CD4-positive, alpha-beta memory T cell (primary cell): ENCODE measurements at regions of chr5 and their contacts with region 1.

Region 1: DNA sequence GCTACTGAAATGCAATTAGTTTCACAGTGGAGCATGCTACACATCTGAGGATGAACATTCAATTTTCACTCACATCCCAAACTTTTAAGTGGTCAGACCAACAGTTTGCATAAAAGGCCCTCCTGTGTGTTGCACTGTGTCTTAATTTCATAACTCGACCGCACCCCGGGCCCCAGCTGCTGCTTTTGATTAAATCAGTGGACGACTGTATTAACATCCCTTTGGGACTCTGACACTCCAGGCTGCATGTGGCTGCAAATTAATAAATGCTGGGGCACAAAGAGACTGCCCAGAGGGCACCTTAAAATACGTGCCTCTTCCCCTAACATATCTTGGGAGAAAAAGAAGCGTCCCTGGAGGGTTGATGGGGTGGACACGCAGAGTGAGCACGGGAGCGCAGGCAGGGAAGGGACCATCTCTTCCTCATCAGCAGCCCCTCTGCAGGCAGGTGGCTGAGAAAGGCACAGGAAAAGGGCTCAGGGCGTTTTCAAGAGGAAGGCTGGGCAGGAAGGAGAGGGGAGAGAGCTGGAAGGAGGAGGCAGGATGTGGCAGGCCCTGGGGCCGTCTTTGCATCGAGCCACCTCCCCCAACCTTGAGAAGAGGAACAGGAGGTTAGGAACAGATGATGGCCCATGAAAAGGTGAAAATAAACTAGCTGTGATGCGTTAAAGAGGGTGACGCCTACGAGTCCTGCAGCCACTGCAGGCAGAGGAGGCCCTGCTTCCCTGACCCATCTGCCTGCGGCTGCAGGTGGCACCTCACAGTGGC is 18.6 kb downstream of the MED10 start:
- DNase-seq: peak in 4 of 5 donors; percentile 33 to 56 (median 44)
- H3K4me3 ChIP-seq: no peak overlapping the region
- H3K4me3 Mint-ChIP-seq: peak overlapping the region; percentile 73 to 87 (median 79)
- H3K27ac ChIP-seq: no peak overlapping the region
- H3K27ac Mint-ChIP-seq: peak overlapping the region; percentile 87 to 94 (median 90)
- H3K4me1 ChIP-seq: peaks cover 23% of the 10 kb centered on the region
- H3K4me1 Mint-ChIP-seq: peaks cover 7 to 32% (median 23%) of the 10 kb centered on the region in 4 donors
- H3K27me3 ChIP-seq: no peaks in the 10 kb centered on the region
- H3K27me3 Mint-ChIP-seq: no peaks in the 10 kb centered on the region

Region 2: DNA sequence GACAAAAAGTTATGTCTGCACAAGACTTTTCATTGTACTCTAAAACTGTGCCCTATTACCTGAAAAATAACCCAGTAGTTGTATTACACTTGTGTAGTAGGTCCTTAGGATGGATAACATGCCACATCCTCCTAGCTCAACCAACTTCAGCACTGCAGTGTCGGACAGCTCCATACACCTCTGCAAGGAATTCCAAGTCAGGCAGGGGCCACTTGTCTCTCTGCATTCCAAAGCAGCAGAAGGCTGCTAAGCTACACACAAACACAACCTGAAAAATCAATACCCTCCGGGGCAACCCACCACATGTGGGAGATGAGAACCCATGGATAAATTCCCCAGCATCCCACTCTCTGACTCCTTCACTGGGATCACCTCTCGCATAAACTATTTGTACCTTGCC is 31.6 kb before region 1 on chr5:
- CTCF ChIA-PET with region 1: no interaction called
- POLR2A ChIA-PET with region 1: no interaction called
- intact Hi-C with region 1: loop called (anchors 1 kb)
- DNase-seq: no peak
- H3K4me3 ChIP-seq: no peak overlapping the region
- H3K4me3 Mint-ChIP-seq: no peak overlapping the region
- H3K27ac ChIP-seq: no peak overlapping the region
- H3K27ac Mint-ChIP-seq: no peak overlapping the region
- H3K4me1 ChIP-seq: no peaks in the 10 kb centered on the region
- H3K4me1 Mint-ChIP-seq: no peaks in the 10 kb centered on the region
- H3K27me3 ChIP-seq: no peaks in the 10 kb centered on the region
- H3K27me3 Mint-ChIP-seq: no peaks in the 10 kb centered on the region